Heart right ventricle (tissue), 16 donors: ENCODE measurements at regions of chr13 and their contacts with region 1.

Region 1: DNA sequence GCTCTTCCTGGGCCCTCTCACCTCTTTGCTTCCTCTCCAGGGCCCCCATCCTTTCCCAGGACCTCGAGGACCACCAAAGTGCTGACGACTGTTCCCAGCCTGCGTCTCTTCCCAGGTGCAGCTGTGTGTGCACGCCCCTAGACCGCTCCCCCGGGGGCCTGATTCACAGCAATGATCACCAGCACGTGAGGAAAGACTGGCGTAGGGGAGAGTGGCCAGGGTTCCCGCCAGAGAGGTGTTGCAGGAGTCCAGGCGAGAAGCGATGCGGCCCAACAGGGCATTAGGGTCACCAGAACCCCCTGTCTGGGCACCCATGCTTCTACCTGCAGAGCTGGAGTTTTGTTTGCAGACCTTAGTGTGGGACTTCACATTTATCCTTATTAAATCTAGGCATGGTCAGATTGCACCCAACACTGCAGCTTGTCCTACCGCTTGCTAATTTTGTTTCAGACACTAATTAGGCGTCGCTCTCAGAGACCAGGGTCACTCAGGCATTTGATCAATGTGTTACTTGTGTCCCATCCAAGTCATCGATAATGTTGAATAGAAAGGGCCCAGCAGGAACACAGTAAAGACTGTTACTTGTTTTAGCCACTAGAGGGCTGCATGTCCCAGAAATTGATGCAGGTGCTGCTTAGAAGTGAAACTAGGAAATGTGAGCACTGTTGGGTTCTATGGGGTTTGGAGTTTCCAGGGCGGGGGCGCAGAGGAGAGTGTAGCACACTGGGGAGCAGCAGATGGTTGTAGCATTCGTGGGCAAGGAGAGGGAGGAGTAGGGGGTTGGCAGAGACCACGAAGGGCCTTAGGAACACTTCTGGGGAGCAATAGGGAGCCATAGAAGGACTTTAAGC is 53.2 kb downstream of the CDADC1 start:
- DNase-seq: peak in 1 of 2 donors; percentile 74
- ATAC-seq: peak; percentile 54 to 86 (median 78)
- H3K4me3 ChIP-seq: peak overlapping the region in 7 of 10 donors; percentile 26 to 46 (median 41)
- H3K27ac ChIP-seq: peak overlapping the region in 3 of 10 donors; percentile 12 to 54 (median 19)
- H3K4me1 ChIP-seq: peaks cover 6 to 30% (median 11%) of the 10 kb centered on the region in 9 donors
- H3K27me3 ChIP-seq: no peaks in the 10 kb centered on the region
- CTCF ChIP-seq: peak; percentile 65 to 89 (median 88)

Region 2: GRCh38 chr13:49400755-49401659 is 100.0 kb after region 1 on chr13:
- intact Hi-C with region 1: loop called in 1 of 10 experiments (anchors 10 kb)
- DNase-seq: peak in 1 of 2 donors; percentile 46
- ATAC-seq: peak; percentile 69 to 97 (median 90)
- H3K4me3 ChIP-seq: peak overlapping the region in 9 of 10 donors; percentile 18 to 50 (median 41)
- H3K27ac ChIP-seq: peak overlapping the region; percentile 57 to 84 (median 70)
- H3K4me1 ChIP-seq: peaks cover 0 to 14% (median 3%) of the 10 kb centered on the region in 9 donors
- H3K27me3 ChIP-seq: no peaks in the 10 kb centered on the region
- CTCF ChIP-seq: no peak

Region 3: GRCh38 chr13:49436890-49437289 is 135.9 kb after region 1 on chr13:
- intact Hi-C with region 1: loop called (anchors 2 to 10 kb)
- DNase-seq: peak in 1 of 2 donors; percentile 30
- ATAC-seq: peak; percentile 56 to 84 (median 68)
- H3K4me3 ChIP-seq: no peak overlapping the region
- H3K27ac ChIP-seq: peak overlapping the region in 1 of 10 donors; percentile 61
- H3K4me1 ChIP-seq: no peaks in the 10 kb centered on the region
- H3K27me3 ChIP-seq: no peaks in the 10 kb centered on the region
- CTCF ChIP-seq: peak in 5 of 9 donors; percentile 19 to 48 (median 35)

Region 4: DNA sequence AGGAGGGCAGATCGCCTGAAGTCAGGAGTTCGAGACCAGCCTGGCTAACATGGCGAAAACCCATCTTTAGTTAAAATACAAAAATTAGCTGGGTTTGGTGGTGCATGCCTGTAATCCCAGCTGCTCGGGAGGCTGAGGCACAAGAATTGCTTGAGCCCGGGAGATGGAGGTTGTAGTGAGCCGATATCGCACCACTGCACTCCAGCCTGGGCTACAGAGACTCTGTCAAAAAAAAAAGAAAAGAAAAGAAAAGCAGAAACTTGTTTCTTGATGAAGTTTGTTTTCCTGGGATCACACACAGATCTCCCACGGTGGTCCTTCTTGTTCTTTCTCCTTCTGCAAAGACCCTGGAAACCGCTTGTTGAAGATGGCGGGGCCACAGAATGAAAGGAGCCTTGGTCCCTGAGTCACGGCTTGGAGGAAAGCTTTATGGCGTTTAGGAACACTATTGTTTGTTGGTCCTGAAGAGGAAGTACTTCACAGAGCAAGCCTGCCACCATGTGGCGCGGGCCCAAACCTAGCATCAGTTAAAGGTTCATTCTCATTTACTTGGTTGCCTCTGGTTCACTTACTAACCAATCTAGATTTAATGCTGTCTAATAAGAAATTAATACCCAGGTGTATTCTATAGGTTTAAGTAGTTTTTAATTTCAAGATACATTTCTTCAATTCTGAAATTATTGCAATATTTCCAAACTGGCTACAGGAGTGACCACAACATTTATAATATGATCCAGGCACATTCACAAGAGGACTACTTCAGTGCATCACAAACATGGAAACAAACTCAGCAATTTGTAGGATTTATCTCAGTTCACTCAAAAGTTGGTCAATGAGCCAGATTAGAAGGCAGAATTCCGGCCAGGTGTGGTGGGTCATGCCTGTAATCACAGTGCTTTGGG is 306.0 kb after region 1 on chr13:
- intact Hi-C with region 1: loop called (anchors 1 to 5 kb)
- DNase-seq: peak; percentile 85 to 88
- ATAC-seq: peak; percentile 93 to 99 (median 97)
- H3K4me3 ChIP-seq: peak overlapping the region in 8 of 10 donors; percentile 18 to 52 (median 42)
- H3K27ac ChIP-seq: peak overlapping the region in 5 of 10 donors; percentile 34 to 53 (median 45)
- H3K4me1 ChIP-seq: peaks cover 0 to 18% (median 0%) of the 10 kb centered on the region in 9 donors
- H3K27me3 ChIP-seq: no peaks in the 10 kb centered on the region
- CTCF ChIP-seq: peak; percentile 68 to 93 (median 84)